ENCODE measurements at regions of chr6 and their contacts with region 1.

Region 1: GRCh38 chr6:129370268-129370916 is 339.6 kb downstream of the ARHGAP18 start:
- DNase-seq: peak in 8 of 9 experiments; percentile 7 to 60 (median 47)
- ATAC-seq: no peak
- H3K4me3 ChIP-seq: no peak overlapping the region
- H3K4me3 Mint-ChIP-seq: no peak overlapping the region
- H3K27ac ChIP-seq: no peak overlapping the region
- H3K27ac Mint-ChIP-seq: no peak overlapping the region
- H3K4me1 ChIP-seq: no peaks in the 10 kb centered on the region
- H3K4me1 Mint-ChIP-seq: peaks cover 12% of the 10 kb centered on the region
- H3K27me3 ChIP-seq: no peaks in the 10 kb centered on the region
- H3K27me3 Mint-ChIP-seq: no peaks in the 10 kb centered on the region
- CTCF ChIP-seq: peak; percentile 81

Region 2: GRCh38 chr6:127464881-127465459 is 1905.4 kb before region 1 on chr6:
- CTCF ChIA-PET with region 1: no interaction called
- POLR2A ChIA-PET with region 1: no interaction called
- intact Hi-C with region 1: loop called (anchors 10 kb)
- DNase-seq: peak; percentile 17 to 68 (median 50)
- ATAC-seq: peak; percentile 51
- H3K4me3 ChIP-seq: no peak overlapping the region
- H3K4me3 Mint-ChIP-seq: no peak overlapping the region
- H3K27ac ChIP-seq: no peak overlapping the region
- H3K27ac Mint-ChIP-seq: no peak overlapping the region
- H3K4me1 ChIP-seq: no peaks in the 10 kb centered on the region
- H3K4me1 Mint-ChIP-seq: no peaks in the 10 kb centered on the region
- H3K27me3 ChIP-seq: no peaks in the 10 kb centered on the region
- H3K27me3 Mint-ChIP-seq: no peaks in the 10 kb centered on the region
- CTCF ChIP-seq: peak; percentile 72

Region 3: GRCh38 chr6:127606131-127606562 is 1764.2 kb before region 1 on chr6:
- CTCF ChIA-PET with region 1: interaction called, 3 read pairs
- POLR2A ChIA-PET with region 1: no interaction called
- intact Hi-C with region 1: loop called in 1 of 2 experiments (anchors 1 kb)
- DNase-seq: peak in 3 of 9 experiments; percentile 19 to 45 (median 33)
- ATAC-seq: no peak
- H3K4me3 ChIP-seq: no peak overlapping the region
- H3K4me3 Mint-ChIP-seq: no peak overlapping the region
- H3K27ac ChIP-seq: no peak overlapping the region
- H3K27ac Mint-ChIP-seq: no peak overlapping the region
- H3K4me1 ChIP-seq: no peaks in the 10 kb centered on the region
- H3K4me1 Mint-ChIP-seq: no peaks in the 10 kb centered on the region
- H3K27me3 ChIP-seq: no peaks in the 10 kb centered on the region
- H3K27me3 Mint-ChIP-seq: peaks cover 2% of the 10 kb centered on the region
- CTCF ChIP-seq: peak; percentile 15

Region 4: GRCh38 chr6:128725271-128726233 is 644.8 kb before region 1 on chr6:
- CTCF ChIA-PET with region 1: interaction called, 4 read pairs
- POLR2A ChIA-PET with region 1: no interaction called
- intact Hi-C with region 1: loop called (anchors 2 to 5 kb)
- DNase-seq: peak in 3 of 9 experiments; percentile 12 to 37 (median 34)
- ATAC-seq: no peak
- H3K4me3 ChIP-seq: no peak overlapping the region
- H3K4me3 Mint-ChIP-seq: no peak overlapping the region
- H3K27ac ChIP-seq: no peak overlapping the region
- H3K27ac Mint-ChIP-seq: no peak overlapping the region
- H3K4me1 ChIP-seq: no peaks in the 10 kb centered on the region
- H3K4me1 Mint-ChIP-seq: no peaks in the 10 kb centered on the region
- H3K27me3 ChIP-seq: no peaks in the 10 kb centered on the region
- H3K27me3 Mint-ChIP-seq: peaks cover 18% of the 10 kb centered on the region
- CTCF ChIP-seq: peak; percentile 74

Region 5: DNA sequence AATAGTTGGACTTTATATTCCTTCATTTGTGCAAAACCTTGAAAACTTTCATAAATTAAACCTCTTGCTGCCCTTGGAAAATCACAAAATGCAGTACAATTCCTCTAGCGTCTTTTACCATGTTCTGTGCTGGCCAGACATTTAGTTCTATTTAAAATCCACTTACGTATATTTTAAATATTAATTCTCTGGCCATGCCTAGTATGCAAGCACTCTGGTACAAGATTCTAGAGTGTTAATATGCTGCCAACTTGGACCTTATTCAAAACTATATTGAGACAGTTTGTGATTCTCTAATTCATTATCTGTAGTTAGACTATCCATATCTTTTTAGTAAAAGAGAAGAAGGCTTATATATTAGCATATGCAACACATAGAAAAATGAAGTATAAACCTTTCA is 11.5 kb after region 1 on chr6:
- CTCF ChIA-PET with region 1: interaction called, 11 read pairs
- POLR2A ChIA-PET with region 1: no interaction called
- intact Hi-C with region 1: no loop called
- DNase-seq: no peak
- ATAC-seq: no peak
- H3K4me3 ChIP-seq: no peak overlapping the region
- H3K4me3 Mint-ChIP-seq: no peak overlapping the region
- H3K27ac ChIP-seq: no peak overlapping the region
- H3K27ac Mint-ChIP-seq: no peak overlapping the region
- H3K4me1 ChIP-seq: no peaks in the 10 kb centered on the region
- H3K4me1 Mint-ChIP-seq: no peaks in the 10 kb centered on the region
- H3K27me3 ChIP-seq: no peaks in the 10 kb centered on the region
- H3K27me3 Mint-ChIP-seq: peaks cover 16% of the 10 kb centered on the region
- CTCF ChIP-seq: no peak